A549 (cell line): ENCODE measurements at regions of chr5 and their contacts with region 1.

Region 1: GRCh38 chr5:151651997-151652645 is 34.6 kb downstream of the SPARC start:
- DNase-seq: peak; percentile 80 to 94
- ATAC-seq: peak; percentile 99 to 100
- H3K4me3 ChIP-seq: no peak overlapping the region
- H3K27ac ChIP-seq: peak overlapping the region in 1 of 2 experiments; percentile 9; a peak in 1 of 6 replicates
- H3K4me1 ChIP-seq: no peaks in the 10 kb centered on the region
- CTCF ChIP-seq: peak; percentile 86
- EP300 ChIP-seq: no peak
- POLR2A ChIP-seq: no peak
- RAD21 ChIP-seq: peak; percentile 91 to 94

Region 2: GRCh38 chr5:151318850-151319732 is 333.0 kb before region 1 on chr5:
- CTCF ChIA-PET with region 1: interaction called, 11 read pairs
- POLR2A ChIA-PET with region 1: interaction called, 3 read pairs
- DNase-seq: peak in 1 of 2 experiments; percentile 31
- ATAC-seq: peak; percentile 78 to 79
- H3K4me3 ChIP-seq: no peak overlapping the region
- H3K27ac ChIP-seq: no peak overlapping the region
- H3K4me1 ChIP-seq: no peaks in the 10 kb centered on the region
- CTCF ChIP-seq: 0 out of 3 replicates have a peak, but pooled peaks have one; percentile 5
- EP300 ChIP-seq: no peak
- POLR2A ChIP-seq: no peak
- RAD21 ChIP-seq: peak in 1 of 2 experiments; percentile 23; a peak in 1 of 5 replicates

Region 3: GRCh38 chr5:151461312-151461711 is 190.8 kb before region 1 on chr5:
- CTCF ChIA-PET with region 1: interaction called, 12 read pairs
- POLR2A ChIA-PET with region 1: no interaction called
- DNase-seq: no peak
- ATAC-seq: no peak
- H3K4me3 ChIP-seq: no peak overlapping the region
- H3K27ac ChIP-seq: no peak overlapping the region
- H3K4me1 ChIP-seq: no peaks in the 10 kb centered on the region
- CTCF ChIP-seq: no peak
- EP300 ChIP-seq: no peak
- POLR2A ChIP-seq: no peak
- RAD21 ChIP-seq: no peak

Region 4: DNA sequence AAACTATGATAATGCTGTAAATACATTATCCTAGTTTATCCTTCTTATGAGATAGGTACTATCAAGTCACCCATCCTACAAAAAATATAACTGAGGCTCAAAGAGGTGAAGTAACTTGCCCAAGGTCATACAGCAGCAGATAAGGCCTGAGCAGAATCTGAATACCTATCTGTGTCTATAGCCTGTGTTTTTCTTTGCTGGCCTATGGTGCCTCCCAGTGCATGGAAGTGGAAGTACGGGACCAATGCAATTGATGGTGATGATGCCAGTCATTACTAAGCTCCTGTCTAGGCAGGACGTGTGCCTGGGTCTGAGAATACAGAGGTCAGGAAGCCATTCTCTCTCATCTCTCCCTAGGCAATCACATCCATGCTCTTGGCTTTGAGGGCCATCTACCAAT is 128.8 kb before region 1 on chr5:
- CTCF ChIA-PET with region 1: interaction called, 13 read pairs
- POLR2A ChIA-PET with region 1: no interaction called
- DNase-seq: peak; percentile 63 to 75
- ATAC-seq: peak; percentile 83 to 95
- H3K4me3 ChIP-seq: no peak overlapping the region
- H3K27ac ChIP-seq: no peak overlapping the region
- H3K4me1 ChIP-seq: no peaks in the 10 kb centered on the region
- CTCF ChIP-seq: peak; percentile 54
- EP300 ChIP-seq: no peak
- POLR2A ChIP-seq: no peak
- RAD21 ChIP-seq: peak; percentile 60 to 75

Region 5: DNA sequence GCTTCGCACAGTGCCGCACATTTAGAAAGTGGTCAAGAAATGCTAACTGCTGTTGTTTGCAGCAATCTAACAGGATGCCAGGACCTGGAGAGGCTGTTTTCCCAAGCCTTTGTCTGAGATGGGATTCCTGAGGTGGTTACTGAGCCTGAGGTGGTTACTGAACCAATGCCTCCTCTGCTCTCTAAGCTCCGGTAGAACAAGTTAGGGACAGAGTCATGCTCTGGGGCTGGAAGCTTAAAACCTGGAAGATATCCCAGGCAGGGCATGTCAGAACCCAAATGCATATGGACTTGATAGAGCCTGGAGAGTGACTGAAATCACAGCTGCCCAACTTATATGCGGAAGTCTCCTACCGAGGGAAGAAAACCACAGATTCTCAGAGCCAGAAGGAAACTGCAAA is 14.4 kb before region 1 on chr5:
- CTCF ChIA-PET with region 1: interaction called, 22 read pairs
- POLR2A ChIA-PET with region 1: no interaction called
- DNase-seq: no peak
- ATAC-seq: no peak; a peak in 1 of 6 replicates
- H3K4me3 ChIP-seq: no peak overlapping the region
- H3K27ac ChIP-seq: no peak overlapping the region
- H3K4me1 ChIP-seq: no peaks in the 10 kb centered on the region
- CTCF ChIP-seq: no peak
- EP300 ChIP-seq: no peak
- POLR2A ChIP-seq: no peak
- RAD21 ChIP-seq: no peak

Region 6: DNA sequence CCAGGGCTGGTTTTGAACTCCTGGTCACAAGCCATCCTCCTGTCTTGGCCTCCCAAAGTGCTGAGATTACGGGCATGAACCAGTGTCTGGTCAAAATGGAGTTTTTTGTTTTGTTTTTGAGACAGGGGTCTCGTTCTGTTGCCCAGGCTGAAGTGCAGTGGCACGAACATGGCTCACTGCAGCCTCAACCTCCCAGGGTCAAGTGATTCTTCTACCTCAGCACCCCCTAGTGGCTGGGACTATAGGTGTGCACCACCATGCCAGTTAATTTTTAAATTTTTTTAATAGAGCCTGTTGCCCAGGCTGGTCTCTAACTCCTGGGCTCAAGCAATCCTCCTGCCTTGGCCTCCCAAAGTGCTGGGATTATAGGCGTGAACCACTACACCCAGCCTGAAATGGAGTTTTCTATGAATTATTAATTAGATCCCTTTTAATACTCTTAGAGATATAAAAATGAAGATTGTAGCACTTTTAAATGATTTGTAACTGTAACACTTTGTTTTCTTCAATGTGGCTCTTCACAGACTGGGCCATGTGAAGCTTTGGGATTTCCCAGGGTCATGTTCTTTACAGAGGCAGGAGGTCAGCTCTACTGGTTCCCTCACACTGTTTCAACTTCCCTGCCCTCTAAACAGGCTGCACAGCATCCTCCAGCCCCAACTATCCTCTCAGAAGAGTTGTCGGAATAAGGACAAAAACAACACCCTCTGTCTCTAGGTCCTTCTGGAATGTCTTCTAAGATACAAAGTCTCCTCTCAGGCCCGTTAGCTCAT is 67.3 kb after region 1 on chr5:
- CTCF ChIA-PET with region 1: interaction called, 12 read pairs
- POLR2A ChIA-PET with region 1: no interaction called
- DNase-seq: peak in 1 of 2 experiments; percentile 33
- ATAC-seq: peak in 1 of 2 experiments; percentile 76; a peak in 3 of 6 replicates
- H3K4me3 ChIP-seq: no peak overlapping the region
- H3K27ac ChIP-seq: peak overlapping the region in 1 of 2 experiments; percentile 66; a peak in 3 of 6 replicates
- H3K4me1 ChIP-seq: peaks cover 12% of the 10 kb centered on the region; the same call in 2 of the 3 replicates
- CTCF ChIP-seq: peak; percentile 40
- EP300 ChIP-seq: no peak
- POLR2A ChIP-seq: no peak
- RAD21 ChIP-seq: peak; percentile 57 to 59

Region 7: DNA sequence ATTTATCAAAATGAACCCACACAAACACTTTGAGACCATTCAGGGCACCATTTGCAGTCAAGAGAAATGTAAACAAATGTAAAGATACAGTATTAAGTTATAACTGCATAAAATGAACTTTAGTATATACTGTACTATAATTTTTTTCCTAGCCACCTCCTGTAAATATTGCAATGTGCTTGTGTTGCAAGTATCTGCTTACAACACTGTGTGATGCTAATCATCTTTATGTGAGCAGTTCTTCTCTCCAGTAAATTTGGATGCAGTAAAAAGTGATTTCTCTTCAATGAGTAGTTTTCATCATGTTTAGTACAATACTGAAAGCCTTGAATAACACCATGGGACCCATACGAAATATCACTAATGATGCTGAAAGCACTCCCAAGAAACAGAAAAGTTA is 129.1 kb after region 1 on chr5:
- CTCF ChIA-PET with region 1: no interaction called
- POLR2A ChIA-PET with region 1: no interaction called
- DNase-seq: no peak
- ATAC-seq: no peak
- H3K4me3 ChIP-seq: no peak overlapping the region
- H3K27ac ChIP-seq: no peak overlapping the region
- H3K4me1 ChIP-seq: peaks cover 63% of the 10 kb centered on the region
- CTCF ChIP-seq: no peak
- EP300 ChIP-seq: no peak
- POLR2A ChIP-seq: no peak
- RAD21 ChIP-seq: no peak

Region 8: DNA sequence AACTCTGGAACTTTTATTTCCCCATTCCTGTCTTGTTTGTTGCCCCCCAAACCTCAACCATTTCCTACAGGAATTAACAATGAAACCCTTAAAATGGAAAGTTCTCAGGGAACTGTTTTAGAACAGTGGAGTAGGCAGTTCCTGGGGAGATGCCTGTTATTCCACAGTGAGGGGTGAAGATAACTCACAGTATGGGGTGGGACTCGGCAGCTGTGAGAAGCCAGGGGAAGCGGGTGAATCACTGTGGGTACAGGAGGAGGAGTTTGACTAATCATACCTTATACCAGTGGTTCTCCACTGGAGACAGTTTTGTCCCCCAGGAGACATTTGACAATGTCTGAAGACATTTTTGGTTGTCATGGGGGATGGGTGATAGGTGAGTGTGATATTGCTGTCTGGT is 309.4 kb after region 1 on chr5:
- CTCF ChIA-PET with region 1: no interaction called
- POLR2A ChIA-PET with region 1: no interaction called
- DNase-seq: no peak
- ATAC-seq: no peak
- H3K4me3 ChIP-seq: no peak overlapping the region
- H3K27ac ChIP-seq: no peak overlapping the region
- H3K4me1 ChIP-seq: no peaks in the 10 kb centered on the region
- CTCF ChIP-seq: no peak
- EP300 ChIP-seq: no peak
- POLR2A ChIP-seq: no peak
- RAD21 ChIP-seq: no peak